ENCODE measurements at regions of chr3 and their contacts with region 1.

Region 1: DNA sequence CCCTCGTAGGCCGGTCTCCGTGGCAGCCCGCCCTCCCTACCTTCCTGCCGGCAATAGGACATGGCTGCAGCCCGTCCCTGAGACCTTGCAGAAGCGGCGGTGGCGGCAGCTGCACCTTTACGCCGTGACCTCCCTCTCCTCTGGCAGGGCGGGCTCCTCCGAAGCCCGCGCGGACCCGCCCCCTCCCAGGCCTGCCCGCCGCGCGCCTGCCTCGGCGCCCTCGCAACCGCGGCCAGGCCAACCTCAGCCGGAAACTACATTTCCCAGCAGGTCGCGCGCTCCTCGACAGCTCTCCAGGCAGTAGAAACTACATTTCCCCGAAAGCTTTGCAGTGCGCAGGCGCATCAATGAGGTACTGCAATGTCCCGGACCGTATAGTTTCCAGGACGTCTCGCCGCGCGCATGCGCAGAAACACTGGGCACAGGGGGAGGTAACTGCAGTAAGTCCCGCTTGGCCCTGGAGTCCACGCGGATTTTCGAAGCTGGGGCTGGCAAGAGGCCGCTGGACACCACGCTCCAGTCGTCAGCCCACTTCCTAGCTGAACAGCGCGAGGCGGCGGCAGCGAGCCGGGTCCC is at the starts of genes CHCHD4 and TMEM43:
- DNase-seq: peak; percentile 99 to 100 (median 100)
- ATAC-seq: peak; percentile 89 to 95 (median 92)
- H3K4me3 ChIP-seq: peak within 1 kb of the TSS; percentile 68 to 91 (median 85)
- H3K27ac ChIP-seq: peak within 1 kb of the TSS; percentile 88 to 96 (median 92)
- H3K4me1 ChIP-seq: peaks cover 9 to 48% (median 32%) of the 10 kb centered on the region in 12 donors
- H3K27me3 ChIP-seq: no peaks in the 10 kb centered on the region
- CTCF ChIP-seq: peak in 1 of 12 donors; percentile 21
- POLR2A ChIP-seq: peak in 1 of 2 donors; percentile 79
- total RNA-seq, gene CHCHD4: 14.8 to 31.1 (median 25.9) TPM
- total RNA-seq, gene TMEM43: 30.5 to 98.6 (median 46.0) TPM

Region 2: GRCh38 chr3:13657660-13658435 is 466.9 kb before region 1 on chr3:
- intact Hi-C with region 1: loop called in 2 of 10 experiments (anchors 5 to 10 kb)
- DNase-seq: peak in 4 of 5 donors; percentile 40 to 49 (median 42)
- ATAC-seq: peak; percentile 38 to 83 (median 78)
- H3K4me3 ChIP-seq: peak overlapping the region in 1 of 12 donors; percentile 21
- H3K27ac ChIP-seq: no peak overlapping the region
- H3K4me1 ChIP-seq: peaks cover 0 to 16% (median 5%) of the 10 kb centered on the region in 12 donors
- H3K27me3 ChIP-seq: peaks cover 0 to 35% (median 11%) of the 10 kb centered on the region in 9 donors
- CTCF ChIP-seq: peak; percentile 57 to 85 (median 70)
- POLR2A ChIP-seq: no peak

Region 3: DNA sequence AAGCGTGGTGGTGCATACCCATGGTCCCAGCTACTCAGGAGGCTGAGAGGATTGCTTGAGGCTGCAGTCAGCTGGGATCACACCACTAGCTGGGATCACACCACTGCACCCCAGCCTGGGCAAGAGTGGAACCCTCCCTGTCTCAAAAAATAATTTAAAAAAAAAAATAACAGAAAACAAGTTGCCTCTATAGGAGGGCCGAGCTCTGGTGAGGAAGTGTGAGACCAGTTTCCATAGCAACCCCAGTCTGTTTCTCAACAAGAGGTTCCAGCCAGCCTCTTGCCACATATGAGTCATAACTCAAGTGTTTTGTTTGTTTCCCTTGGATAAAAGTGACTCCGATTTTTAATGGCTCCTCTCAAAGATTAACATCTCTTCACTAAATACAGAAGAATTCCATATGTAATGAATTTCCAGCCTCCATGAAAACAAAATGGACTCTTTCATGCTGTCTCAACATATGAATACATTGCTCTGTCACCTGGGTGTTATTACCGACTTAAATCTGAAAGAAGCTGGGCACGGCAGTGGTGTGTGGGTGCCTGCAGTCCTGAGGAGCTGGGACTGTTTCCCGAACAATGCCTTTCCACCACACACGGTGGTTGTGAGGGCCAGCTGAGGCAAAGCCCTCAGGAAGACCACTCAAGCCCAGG is 19.8 kb after region 1 on chr3:
- intact Hi-C with region 1: loop called in 3 of 10 experiments (anchors 1 to 2 kb)
- DNase-seq: peak in 4 of 5 donors; percentile 61 to 80 (median 74)
- ATAC-seq: peak; percentile 65 to 89 (median 80)
- H3K4me3 ChIP-seq: peak overlapping the region in 8 of 12 donors; percentile 10 to 40 (median 32)
- H3K27ac ChIP-seq: peak overlapping the region; percentile 34 to 91 (median 81)
- H3K4me1 ChIP-seq: peaks cover 0 to 74% (median 36%) of the 10 kb centered on the region in 12 donors
- H3K27me3 ChIP-seq: no peaks in the 10 kb centered on the region
- CTCF ChIP-seq: no peak
- POLR2A ChIP-seq: no peak

Region 4: DNA sequence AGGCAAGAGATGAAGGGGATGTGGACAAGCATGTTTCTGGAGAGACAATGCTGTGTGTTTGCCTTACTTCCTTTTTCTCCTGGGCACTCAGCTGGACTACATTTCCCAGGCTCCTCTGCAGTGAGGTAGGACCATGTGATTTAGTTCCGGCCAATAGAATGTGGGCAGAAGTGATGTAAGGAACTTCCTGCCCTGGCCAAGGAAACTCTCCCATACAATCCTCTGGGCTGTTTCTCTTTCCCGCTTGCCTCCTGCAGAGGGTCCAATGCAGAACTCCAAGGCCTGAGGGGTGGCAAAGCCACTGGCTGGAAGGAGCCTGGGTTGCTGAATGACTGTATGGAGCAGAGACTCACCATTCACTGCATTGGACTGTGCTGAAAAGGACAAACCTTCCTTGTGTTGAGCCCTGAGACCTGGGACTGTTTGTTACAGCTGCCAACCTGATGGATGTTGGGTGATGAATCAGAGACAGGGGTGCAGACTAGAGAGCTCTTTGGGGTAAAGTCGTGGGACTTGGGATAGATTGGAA is 195.0 kb after region 1 on chr3:
- intact Hi-C with region 1: no loop called
- DNase-seq: peak in 1 of 5 donors; percentile 31
- ATAC-seq: peak in 3 of 4 donors; percentile 57 to 60 (median 59)
- H3K4me3 ChIP-seq: no peak overlapping the region
- H3K27ac ChIP-seq: no peak overlapping the region
- H3K4me1 ChIP-seq: peaks cover 0 to 24% (median 4%) of the 10 kb centered on the region in 12 donors
- H3K27me3 ChIP-seq: peaks cover 0 to 27% (median 5%) of the 10 kb centered on the region in 9 donors
- CTCF ChIP-seq: no peak
- POLR2A ChIP-seq: no peak